Endothelial cell of umbilical vein (primary cell): ENCODE measurements at regions of chr13 and their contacts with region 1.

Region 1: DNA sequence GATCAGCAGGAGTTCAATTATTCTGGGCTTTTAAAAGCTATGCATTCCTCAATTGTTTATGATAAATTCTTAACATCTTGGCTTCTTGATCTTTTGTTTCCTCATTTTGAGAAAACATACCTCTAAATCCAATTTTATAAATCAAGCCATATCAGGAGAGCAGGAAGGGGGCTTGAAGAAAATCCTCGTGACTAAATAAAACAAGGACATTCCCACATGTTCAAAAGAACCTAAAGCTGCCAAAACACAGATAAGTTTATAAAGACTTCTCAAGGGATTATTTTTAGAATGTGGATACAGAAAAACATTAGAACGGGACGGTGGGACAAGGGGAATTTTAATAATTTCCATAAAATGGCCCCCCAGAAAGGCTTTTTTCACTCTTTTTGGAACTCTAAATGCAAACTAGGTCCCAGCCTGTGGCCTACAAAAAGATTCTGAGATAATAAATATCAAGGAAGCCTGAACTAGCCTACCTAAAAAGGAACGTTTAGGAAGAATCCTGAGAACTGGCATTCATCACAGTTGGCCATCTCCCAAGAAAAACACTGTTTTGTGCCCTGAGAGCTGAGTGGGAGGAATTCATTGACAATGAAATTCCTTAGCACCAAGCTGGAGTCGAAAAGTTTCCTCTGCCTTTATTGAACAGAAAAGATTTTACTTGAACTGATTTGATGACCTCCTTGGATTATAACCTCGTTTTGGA is 30.1 kb downstream of the ZAR1L start:
- DNase-seq: peak; percentile 98
- H3K4me3 ChIP-seq: no peak overlapping the region
- H3K27ac ChIP-seq: peak overlapping the region; percentile 82
- H3K4me1 ChIP-seq: peaks cover 27% of the 10 kb centered on the region
- H3K27me3 ChIP-seq: no peaks in the 10 kb centered on the region
- CTCF ChIP-seq: no peak
- POLR2A ChIP-seq: no peak

Region 2: DNA sequence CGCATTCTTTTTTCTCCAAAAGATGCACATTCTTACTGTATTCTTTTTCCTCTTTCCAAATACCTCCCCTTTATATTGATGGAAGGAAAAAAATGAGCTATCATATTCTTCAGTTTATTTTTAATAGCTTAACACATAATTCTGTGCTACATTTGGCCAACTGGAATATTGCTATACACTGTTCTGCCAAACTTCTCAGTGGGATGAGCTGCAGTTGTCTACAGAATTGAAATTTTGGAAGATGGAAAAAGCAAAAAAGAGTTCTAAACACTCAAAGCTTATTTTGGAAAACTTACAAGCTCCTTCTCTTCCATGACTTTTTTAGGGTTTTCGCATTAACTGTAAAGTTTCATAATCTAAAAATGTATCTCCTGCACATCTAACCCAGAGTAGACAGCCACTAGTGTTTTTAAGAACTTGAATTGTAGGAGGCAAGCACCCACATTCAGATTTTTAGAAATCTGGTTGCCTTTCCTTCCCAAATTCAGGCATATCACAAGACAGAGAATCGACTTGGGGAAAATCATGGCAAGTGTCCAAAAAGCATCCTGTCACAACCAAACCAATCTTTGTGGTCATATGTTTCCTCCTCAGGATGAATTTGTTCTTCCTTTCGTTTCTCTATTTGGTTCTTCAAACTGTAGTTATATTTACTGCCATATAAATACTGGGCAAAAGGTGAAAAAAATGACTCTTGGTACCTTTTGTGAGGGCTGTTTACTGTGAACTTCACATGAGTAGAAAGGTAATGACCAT is 364.9 kb before region 1 on chr13:
- CTCF ChIA-PET with region 1: no interaction called
- POLR2A ChIA-PET with region 1: no interaction called
- dilution Hi-C with region 1: no loop called
- intact Hi-C with region 1: no loop called
- DNase-seq: no peak
- H3K4me3 ChIP-seq: no peak overlapping the region
- H3K27ac ChIP-seq: no peak overlapping the region
- H3K4me1 ChIP-seq: no peaks in the 10 kb centered on the region
- H3K27me3 ChIP-seq: no peaks in the 10 kb centered on the region
- CTCF ChIP-seq: no peak
- POLR2A ChIP-seq: no peak

Region 3: GRCh38 chr13:32255724-32256109 is 29.4 kb before region 1 on chr13:
- CTCF ChIA-PET with region 1: interaction called, 16 read pairs
- POLR2A ChIA-PET with region 1: no interaction called
- dilution Hi-C with region 1: no loop called
- intact Hi-C with region 1: no loop called
- DNase-seq: peak; percentile 85
- H3K4me3 ChIP-seq: peak overlapping the region in 1 of 3 experiments; percentile 30
- H3K27ac ChIP-seq: peak overlapping the region; percentile 69
- H3K4me1 ChIP-seq: peaks cover 45% of the 10 kb centered on the region
- H3K27me3 ChIP-seq: no peaks in the 10 kb centered on the region
- CTCF ChIP-seq: no peak
- POLR2A ChIP-seq: no peak

Region 4: GRCh38 chr13:32261567-32261966 is 23.5 kb before region 1 on chr13:
- CTCF ChIA-PET with region 1: interaction called, 16 read pairs
- POLR2A ChIA-PET with region 1: interaction called, 5 read pairs
- dilution Hi-C with region 1: no loop called
- intact Hi-C with region 1: loop called (anchors 1 kb)
- DNase-seq: peak; percentile 99
- H3K4me3 ChIP-seq: peak overlapping the region; percentile 36 to 75 (median 43)
- H3K27ac ChIP-seq: peak overlapping the region; percentile 86
- H3K4me1 ChIP-seq: peaks cover 70% of the 10 kb centered on the region
- H3K27me3 ChIP-seq: no peaks in the 10 kb centered on the region
- CTCF ChIP-seq: no peak
- POLR2A ChIP-seq: peak; percentile 87

Region 5: DNA sequence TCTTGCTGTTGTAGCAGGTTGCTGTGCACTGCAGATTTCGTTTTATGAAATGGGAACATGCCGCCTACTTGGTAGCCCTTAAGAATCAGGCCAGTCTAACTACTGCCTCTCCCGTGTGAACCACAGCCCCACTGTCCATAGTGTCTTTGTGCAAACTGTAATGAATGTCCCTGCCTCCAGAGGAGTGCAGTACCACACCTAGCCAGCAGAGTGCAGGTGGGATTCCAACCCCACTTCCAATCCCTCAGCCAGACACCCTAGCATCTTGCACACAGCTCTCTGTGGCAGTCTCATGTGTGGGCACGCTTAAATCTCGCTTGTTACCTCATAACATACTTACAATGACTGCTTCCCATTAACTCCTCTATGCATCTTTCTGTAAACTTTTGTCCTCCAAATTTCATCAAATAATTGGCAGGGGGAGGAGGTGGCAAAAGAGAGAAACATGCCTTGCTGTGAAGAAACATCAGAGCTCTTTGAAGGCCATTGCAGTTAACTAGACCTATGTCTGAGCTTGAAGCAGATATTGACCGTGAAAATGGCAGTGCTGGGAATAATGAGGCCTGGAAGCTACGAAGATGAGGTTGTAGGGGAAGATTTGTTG is 17.1 kb before region 1 on chr13:
- CTCF ChIA-PET with region 1: interaction called, 6 read pairs
- POLR2A ChIA-PET with region 1: interaction called, 5 read pairs
- dilution Hi-C with region 1: no loop called
- intact Hi-C with region 1: loop called (anchors 1 kb)
- DNase-seq: peak; percentile 47
- H3K4me3 ChIP-seq: no peak overlapping the region
- H3K27ac ChIP-seq: no peak overlapping the region
- H3K4me1 ChIP-seq: peaks cover 71% of the 10 kb centered on the region
- H3K27me3 ChIP-seq: no peaks in the 10 kb centered on the region
- CTCF ChIP-seq: peak; percentile 26 to 58
- POLR2A ChIP-seq: no peak

Region 6: GRCh38 chr13:32310134-32310706 is 25.1 kb after region 1 on chr13:
- CTCF ChIA-PET with region 1: interaction called, 4 read pairs
- POLR2A ChIA-PET with region 1: no interaction called
- dilution Hi-C with region 1: no loop called
- intact Hi-C with region 1: loop called (anchors 1 kb)
- DNase-seq: peak; percentile 72
- H3K4me3 ChIP-seq: no peak overlapping the region
- H3K27ac ChIP-seq: no peak overlapping the region
- H3K4me1 ChIP-seq: peaks cover 14% of the 10 kb centered on the region
- H3K27me3 ChIP-seq: no peaks in the 10 kb centered on the region
- CTCF ChIP-seq: peak; percentile 56 to 60
- POLR2A ChIP-seq: no peak